Gastrocnemius medialis (tissue), 4 donors: ENCODE measurements at regions of chr5 and their contacts with region 1.

Region 1: DNA sequence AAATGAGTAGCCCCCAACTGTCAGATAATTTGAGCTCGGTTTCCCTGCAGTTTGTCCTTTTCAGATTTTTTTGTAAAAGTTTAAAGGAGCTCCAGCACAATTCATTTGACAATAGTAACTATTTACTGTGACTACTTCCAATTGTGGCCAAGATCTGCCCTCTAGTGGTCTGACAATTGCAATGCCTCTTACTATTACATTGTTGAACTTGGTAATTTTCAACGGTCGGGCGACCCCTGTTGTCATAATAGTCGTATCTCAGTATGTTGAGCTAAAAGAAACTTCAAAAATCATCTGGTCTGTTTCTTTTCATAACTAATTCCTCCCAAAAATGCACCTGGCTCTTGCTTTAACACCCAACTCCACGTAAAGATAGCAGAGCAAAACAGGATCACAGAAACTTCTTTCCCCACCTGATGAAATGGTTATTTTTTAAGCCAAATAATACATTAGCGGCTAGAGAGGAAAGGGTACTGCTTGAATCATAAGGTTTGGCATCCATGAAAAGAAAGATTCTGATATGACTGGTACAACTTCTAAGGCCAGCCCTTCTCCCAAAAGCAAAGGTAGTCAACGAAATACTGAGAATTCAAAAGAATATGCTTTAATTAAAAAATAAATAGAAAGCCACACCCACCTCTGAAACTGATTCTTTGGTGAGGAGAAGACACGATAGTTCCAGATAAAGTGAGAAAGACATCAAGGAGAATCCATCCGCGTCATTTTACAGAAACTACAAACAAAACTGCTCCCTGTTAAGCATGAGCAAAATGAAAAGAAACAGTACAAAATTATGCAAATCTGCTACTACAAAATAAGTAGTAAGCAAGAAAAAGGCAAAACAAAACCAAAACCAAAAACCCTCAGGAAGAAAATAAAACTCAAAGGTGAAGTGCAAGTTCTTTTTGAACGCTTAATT is 76.9 kb upstream of the HTR4 start:
- DNase-seq: peak; percentile 40 to 48
- ATAC-seq: peak; percentile 74 to 83
- H3K4me3 ChIP-seq: no peak overlapping the region
- H3K27ac ChIP-seq: no peak overlapping the region
- H3K4me1 ChIP-seq: no peaks in the 10 kb centered on the region
- H3K27me3 ChIP-seq: no peaks in the 10 kb centered on the region
- CTCF ChIP-seq: peak; percentile 58 to 88 (median 85)
- POLR2A ChIP-seq: no peak

Region 2: DNA sequence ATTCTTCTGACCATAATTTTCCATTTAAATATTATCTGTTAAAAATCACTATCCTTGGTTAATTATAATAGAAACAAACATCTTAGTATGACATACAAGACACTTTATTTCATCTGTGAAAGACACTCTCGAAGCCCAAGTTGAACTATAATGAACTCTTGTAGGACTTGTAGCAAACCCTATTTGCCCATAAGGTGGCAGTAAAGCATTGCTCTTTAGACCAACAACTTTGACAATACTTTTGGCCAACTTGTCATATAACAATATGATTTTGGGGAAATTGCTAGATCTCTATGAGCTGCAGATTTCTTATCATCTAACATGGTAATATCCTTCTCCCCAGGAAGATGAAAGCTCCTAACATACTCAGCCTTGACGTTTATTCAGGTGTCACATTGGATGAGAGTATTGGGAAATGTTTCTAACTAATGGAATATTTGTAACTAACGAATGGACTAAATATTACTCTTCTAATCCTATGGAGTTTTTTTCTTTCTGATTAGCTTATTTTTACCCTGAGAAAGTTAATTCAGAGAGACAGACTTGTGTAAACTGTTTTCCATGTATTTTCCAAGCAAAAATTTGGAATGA is 551.9 kb before region 1 on chr5:
- in situ Hi-C with region 1: loop called in 2 of 4 experiments (anchors 5 to 10 kb)
- intact Hi-C with region 1: loop called (anchors 2 kb)
- DNase-seq: no peak
- ATAC-seq: peak; percentile 41 to 52
- H3K4me3 ChIP-seq: no peak overlapping the region
- H3K27ac ChIP-seq: no peak overlapping the region
- H3K4me1 ChIP-seq: no peaks in the 10 kb centered on the region
- H3K27me3 ChIP-seq: no peaks in the 10 kb centered on the region
- CTCF ChIP-seq: peak in 4 of 5 experiments; percentile 34 to 56 (median 44)
- POLR2A ChIP-seq: no peak

Region 3: GRCh38 chr5:148443998-148444397 is 287.2 kb before region 1 on chr5:
- in situ Hi-C with region 1: loop called (anchors 5 kb)
- intact Hi-C with region 1: loop called (anchors 1 kb)
- DNase-seq: peak in 1 of 2 donors; percentile 7
- ATAC-seq: peak; percentile 83 to 91
- H3K4me3 ChIP-seq: no peak overlapping the region
- H3K27ac ChIP-seq: no peak overlapping the region
- H3K4me1 ChIP-seq: no peaks in the 10 kb centered on the region
- H3K27me3 ChIP-seq: no peaks in the 10 kb centered on the region
- CTCF ChIP-seq: peak; percentile 57 to 77 (median 72)
- POLR2A ChIP-seq: no peak

Region 4: GRCh38 chr5:148623741-148624140 is 107.5 kb before region 1 on chr5:
- in situ Hi-C with region 1: no loop called
- intact Hi-C with region 1: no loop called
- DNase-seq: no peak
- ATAC-seq: no peak
- H3K4me3 ChIP-seq: no peak overlapping the region
- H3K27ac ChIP-seq: no peak overlapping the region
- H3K4me1 ChIP-seq: no peaks in the 10 kb centered on the region
- H3K27me3 ChIP-seq: peaks cover 0 to 2% (median 0%) of the 10 kb centered on the region in 3 donors
- CTCF ChIP-seq: no peak
- POLR2A ChIP-seq: no peak

Region 5: DNA sequence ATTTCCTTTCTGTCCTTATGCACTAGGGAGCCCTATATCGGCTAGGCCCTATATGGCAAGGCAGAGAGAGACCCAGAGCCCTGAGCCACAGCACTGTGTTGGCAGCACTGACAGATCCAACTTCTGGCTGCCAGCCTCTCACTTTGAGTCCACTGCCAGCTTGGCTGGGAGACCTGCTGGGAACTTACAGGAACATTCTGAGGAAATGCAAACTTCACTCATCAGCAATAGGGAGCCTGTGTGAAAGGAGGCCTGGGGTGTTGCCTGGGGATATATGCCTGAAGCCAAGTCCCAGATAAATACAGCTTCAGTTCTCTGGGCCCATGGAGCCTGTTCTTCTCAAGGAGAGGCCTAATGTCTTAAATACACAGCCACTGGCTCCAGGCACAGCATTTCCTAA is 173.2 kb after region 1 on chr5:
- in situ Hi-C with region 1: no loop called
- intact Hi-C with region 1: loop called (anchors 5 kb)
- DNase-seq: peak; percentile 68 to 81
- ATAC-seq: peak; percentile 84 to 94
- H3K4me3 ChIP-seq: no peak overlapping the region
- H3K27ac ChIP-seq: peak overlapping the region; percentile 59 to 82 (median 71)
- H3K4me1 ChIP-seq: peaks cover 15 to 63% of the 10 kb centered on the region in 2 donors
- H3K27me3 ChIP-seq: no peaks in the 10 kb centered on the region
- CTCF ChIP-seq: no peak
- POLR2A ChIP-seq: no peak

Region 6: GRCh38 chr5:149035372-149035790 is 304.2 kb after region 1 on chr5:
- in situ Hi-C with region 1: loop called (anchors 5 to 10 kb)
- intact Hi-C with region 1: loop called (anchors 1 kb)
- DNase-seq: peak; percentile 38 to 64
- ATAC-seq: peak; percentile 73 to 88
- H3K4me3 ChIP-seq: no peak overlapping the region
- H3K27ac ChIP-seq: no peak overlapping the region
- H3K4me1 ChIP-seq: peaks cover 0 to 9% of the 10 kb centered on the region in 2 donors
- H3K27me3 ChIP-seq: no peaks in the 10 kb centered on the region
- CTCF ChIP-seq: peak; percentile 76 to 92 (median 81)
- POLR2A ChIP-seq: no peak

Region 7: GRCh38 chr5:149228618-149229297 is 497.6 kb after region 1 on chr5:
- in situ Hi-C with region 1: loop called (anchors 25 kb)
- intact Hi-C with region 1: loop called (anchors 10 kb)
- DNase-seq: peak; percentile 53 to 69
- ATAC-seq: peak; percentile 99
- H3K4me3 ChIP-seq: no peak overlapping the region
- H3K27ac ChIP-seq: peak overlapping the region; percentile 17 to 70 (median 52)
- H3K4me1 ChIP-seq: peaks cover 14 to 17% of the 10 kb centered on the region in 2 donors
- H3K27me3 ChIP-seq: no peaks in the 10 kb centered on the region
- CTCF ChIP-seq: peak; percentile 75 to 92 (median 82)
- POLR2A ChIP-seq: no peak